ENCODE measurements at regions of chr1 and their contacts with region 1.

Region 1: GRCh38 chr1:155084722-155085503 is 6.3 kb downstream of the EFNA3 start:
- DNase-seq: peak; percentile 97
- ATAC-seq: peak; percentile 78
- H3K4me3 Mint-ChIP-seq: peak overlapping the region; percentile 82
- H3K27ac Mint-ChIP-seq: peak overlapping the region; percentile 91
- H3K4me1 Mint-ChIP-seq: peaks cover 36% of the 10 kb centered on the region
- H3K27me3 Mint-ChIP-seq: peaks cover 27% of the 10 kb centered on the region

Region 2: GRCh38 chr1:154974063-154974807 is 110.7 kb before region 1 on chr1 and contains the start of gene CKS1B:
- CTCF ChIA-PET with region 1: interaction called, 3 read pairs
- POLR2A ChIA-PET with region 1: interaction called, 3 read pairs
- intact Hi-C with region 1: loop called in 1 of 2 experiments (anchors 1 kb)
- DNase-seq: peak; percentile 98
- ATAC-seq: peak; percentile 86
- H3K4me3 Mint-ChIP-seq: no peak within 1 kb of the TSS
- H3K27ac Mint-ChIP-seq: no peak within 1 kb of the TSS
- H3K4me1 Mint-ChIP-seq: peaks cover 30% of the 10 kb centered on the region
- H3K27me3 Mint-ChIP-seq: no peaks in the 10 kb centered on the region
- total RNA-seq, gene CKS1B: 190 to 196 TPM

Region 3: GRCh38 chr1:155044812-155045690 is 39.9 kb before region 1 on chr1:
- CTCF ChIA-PET with region 1: interaction called, 14 read pairs
- POLR2A ChIA-PET with region 1: no interaction called
- intact Hi-C with region 1: loop called (anchors 1 kb)
- DNase-seq: peak; percentile 81
- ATAC-seq: peak; percentile 98
- H3K4me3 Mint-ChIP-seq: no peak overlapping the region
- H3K27ac Mint-ChIP-seq: no peak overlapping the region
- H3K4me1 Mint-ChIP-seq: peaks cover 16% of the 10 kb centered on the region
- H3K27me3 Mint-ChIP-seq: no peaks in the 10 kb centered on the region

Region 4: GRCh38 chr1:155070721-155071569 is 14.0 kb before region 1 on chr1:
- CTCF ChIA-PET with region 1: interaction called, 81 read pairs
- POLR2A ChIA-PET with region 1: no interaction called
- intact Hi-C with region 1: loop called in 1 of 2 experiments (anchors 1 kb)
- DNase-seq: peak; percentile 89
- ATAC-seq: peak; percentile 95
- H3K4me3 Mint-ChIP-seq: peak overlapping the region; percentile 39
- H3K27ac Mint-ChIP-seq: no peak overlapping the region
- H3K4me1 Mint-ChIP-seq: peaks cover 19% of the 10 kb centered on the region
- H3K27me3 Mint-ChIP-seq: no peaks in the 10 kb centered on the region

Region 5: GRCh38 chr1:155167166-155168104 is 82.5 kb after region 1 on chr1:
- CTCF ChIA-PET with region 1: interaction called, 72 read pairs
- POLR2A ChIA-PET with region 1: interaction called, 5 read pairs
- intact Hi-C with region 1: loop called (anchors 2 kb)
- DNase-seq: peak; percentile 95
- ATAC-seq: peak; percentile 88
- H3K4me3 Mint-ChIP-seq: peak overlapping the region; percentile 21
- H3K27ac Mint-ChIP-seq: peak overlapping the region; percentile 1
- H3K4me1 Mint-ChIP-seq: peaks cover 26% of the 10 kb centered on the region
- H3K27me3 Mint-ChIP-seq: no peaks in the 10 kb centered on the region

Region 6: GRCh38 chr1:155193275-155193990 is 108.5 kb after region 1 on chr1:
- CTCF ChIA-PET with region 1: no interaction called
- POLR2A ChIA-PET with region 1: interaction called, 7 read pairs
- intact Hi-C with region 1: loop called in 1 of 2 experiments (anchors 1 kb)
- DNase-seq: peak; percentile 89
- ATAC-seq: peak; percentile 62
- H3K4me3 Mint-ChIP-seq: peak overlapping the region; percentile 94
- H3K27ac Mint-ChIP-seq: peak overlapping the region; percentile 96
- H3K4me1 Mint-ChIP-seq: peaks cover 31% of the 10 kb centered on the region
- H3K27me3 Mint-ChIP-seq: no peaks in the 10 kb centered on the region